ACHN (cell line): ENCODE measurements at regions of chr13 and their contacts with region 1.

Region 1: GRCh38 chr13:93227878-93228642 is 1.5 kb downstream of the GPC6 start:
- DNase-seq: peak; percentile 76

Region 2: GRCh38 chr13:93039131-93039530 is 188.9 kb before region 1 on chr13:
- in situ Hi-C with region 1: no loop called
- DNase-seq: no peak

Region 3: DNA sequence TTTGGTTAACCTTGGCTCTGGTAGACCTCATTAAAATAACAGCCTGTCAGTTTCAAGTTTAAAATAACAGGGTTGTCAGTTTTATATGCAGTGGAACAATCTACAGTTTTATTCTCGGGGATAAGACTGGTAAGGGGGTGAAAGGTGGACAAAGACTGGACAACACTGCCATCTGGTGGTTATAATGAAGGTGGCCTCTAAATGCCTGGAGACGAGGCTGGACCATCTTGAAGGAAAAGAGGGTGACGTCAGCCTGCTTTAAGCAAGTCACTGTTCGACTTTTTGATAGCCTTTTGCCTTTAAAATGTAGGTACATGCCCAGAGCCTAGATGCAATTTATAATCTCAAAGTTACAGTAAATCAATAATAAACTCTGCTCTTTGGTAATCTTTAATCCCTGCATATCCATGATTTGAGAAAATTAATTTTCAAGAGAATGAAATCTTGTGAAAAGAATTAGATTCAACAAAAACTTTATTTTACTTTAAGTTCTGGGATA is 1134.4 kb after region 1 on chr13:
- in situ Hi-C with region 1: loop called (anchors 25 kb)
- DNase-seq: peak; percentile 81